ENCODE measurements at regions of chr19 and their contacts with region 1.

Region 1: DNA sequence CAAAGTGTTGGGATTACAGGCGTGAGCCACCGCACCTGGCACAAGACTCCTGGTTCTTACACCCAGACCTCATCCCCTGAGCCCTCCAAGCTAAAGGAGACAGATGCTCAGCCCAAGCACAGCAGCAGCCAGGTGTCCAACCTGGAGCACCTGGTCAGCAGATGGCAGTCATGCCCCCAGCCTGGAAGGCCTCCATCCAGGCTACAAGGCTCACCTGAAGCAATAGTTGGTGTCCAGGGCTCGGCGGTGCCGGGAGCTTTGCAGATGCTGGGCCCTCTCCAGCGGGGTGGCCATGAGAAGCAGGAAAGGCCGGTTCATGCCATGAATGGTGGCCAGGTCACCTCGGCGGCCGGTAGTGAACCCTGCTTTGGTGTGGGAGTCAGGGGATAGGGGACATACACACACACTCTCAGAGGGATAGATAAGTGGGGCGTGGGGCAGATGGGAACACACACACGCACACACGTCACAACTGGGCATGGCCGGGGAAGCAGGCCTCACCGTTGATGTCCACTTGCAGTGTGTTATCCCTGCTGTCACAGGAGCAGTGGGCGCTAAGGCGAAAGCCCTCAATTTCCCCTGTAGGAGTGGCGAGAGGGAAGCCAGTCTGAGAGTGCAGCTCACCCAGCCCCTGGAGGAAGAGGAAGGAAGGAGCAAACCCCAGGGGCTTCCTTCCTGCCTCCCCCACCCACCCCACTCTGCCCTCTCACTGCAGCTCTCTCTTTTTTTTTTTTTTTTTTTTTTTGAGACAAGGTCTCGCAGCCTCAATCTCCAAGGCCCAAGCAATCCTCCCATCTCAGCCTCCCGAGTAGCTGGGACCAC is 11.8 kb downstream of the TGFB1 start:
- DNase-seq: no peak
- ATAC-seq: no peak
- H3K4me3 ChIP-seq: no peak overlapping the region
- H3K27ac ChIP-seq: no peak overlapping the region
- H3K4me1 ChIP-seq: no peaks in the 10 kb centered on the region
- H3K27me3 ChIP-seq: no peaks in the 10 kb centered on the region
- CTCF ChIP-seq: 0 out of 2 replicates have a peak, but pooled peaks have one; percentile 22

Region 2: GRCh38 chr19:40658031-40658430 is 683.8 kb before region 1 on chr19:
- CTCF ChIA-PET with region 1: interaction called, 15 read pairs
- POLR2A ChIA-PET with region 1: no interaction called
- intact Hi-C with region 1: no loop called
- DNase-seq: no peak
- ATAC-seq: no peak
- H3K4me3 ChIP-seq: no peak overlapping the region
- H3K27ac ChIP-seq: no peak overlapping the region
- H3K4me1 ChIP-seq: no peaks in the 10 kb centered on the region
- H3K27me3 ChIP-seq: no peaks in the 10 kb centered on the region
- CTCF ChIP-seq: no peak

Region 3: GRCh38 chr19:41050434-41050833 is 291.4 kb before region 1 on chr19:
- CTCF ChIA-PET with region 1: no interaction called
- POLR2A ChIA-PET with region 1: no interaction called
- intact Hi-C with region 1: no loop called
- DNase-seq: no peak
- ATAC-seq: no peak
- H3K4me3 ChIP-seq: no peak overlapping the region
- H3K27ac ChIP-seq: no peak overlapping the region
- H3K4me1 ChIP-seq: no peaks in the 10 kb centered on the region
- H3K27me3 ChIP-seq: no peaks in the 10 kb centered on the region
- CTCF ChIP-seq: no peak

Region 4: DNA sequence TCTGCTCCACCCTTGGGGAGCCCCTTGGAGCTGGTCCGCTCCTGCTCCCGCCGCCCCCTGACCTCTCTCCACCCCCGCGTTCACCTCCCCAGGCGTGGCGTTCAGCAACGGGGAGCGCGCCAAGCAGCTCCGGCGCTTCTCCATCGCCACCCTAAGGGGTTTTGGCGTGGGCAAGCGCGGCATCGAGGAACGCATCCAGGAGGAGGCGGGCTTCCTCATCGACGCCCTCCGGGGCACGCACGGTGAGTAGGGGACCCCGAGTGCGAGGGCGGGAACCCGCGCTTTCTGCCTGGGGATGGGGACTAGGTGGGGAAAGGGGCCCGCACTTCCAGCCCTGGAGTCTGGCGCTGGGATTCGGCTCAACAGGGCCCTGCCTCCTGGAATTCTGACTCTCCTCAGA is 251.9 kb before region 1 on chr19:
- CTCF ChIA-PET with region 1: no interaction called
- POLR2A ChIA-PET with region 1: no interaction called
- intact Hi-C with region 1: no loop called
- DNase-seq: no peak
- ATAC-seq: no peak
- H3K4me3 ChIP-seq: no peak overlapping the region
- H3K27ac ChIP-seq: no peak overlapping the region
- H3K4me1 ChIP-seq: no peaks in the 10 kb centered on the region
- H3K27me3 ChIP-seq: no peaks in the 10 kb centered on the region
- CTCF ChIP-seq: no peak

Region 5: GRCh38 chr19:41310033-41310758 is 31.7 kb before region 1 on chr19 and contains the start of gene CCDC97:
- CTCF ChIA-PET with region 1: no interaction called
- POLR2A ChIA-PET with region 1: no interaction called
- intact Hi-C with region 1: no loop called
- DNase-seq: peak; percentile 78
- ATAC-seq: peak; percentile 59
- H3K4me3 ChIP-seq: peak within 1 kb of the TSS; percentile 76
- H3K27ac ChIP-seq: peak within 1 kb of the TSS; percentile 86
- H3K4me1 ChIP-seq: peaks cover 10% of the 10 kb centered on the region; the same call in 1 of the 2 replicates
- H3K27me3 ChIP-seq: no peaks in the 10 kb centered on the region
- CTCF ChIP-seq: no peak
- total RNA-seq, gene CCDC97: 18.3 and 18.4 TPM in 2 replicates

Measured in PC-3 (cell line).